ENCODE measurements at regions of chr3 and their contacts with region 1.

Region 1: GRCh38 chr3:31531992-31532586 is 636 bp upstream of the STT3B start:
- DNase-seq: peak; percentile 85 to 98
- H3K4me3 ChIP-seq: peak overlapping the region; percentile 92
- H3K27ac ChIP-seq: peak overlapping the region; percentile 94
- H3K4me1 ChIP-seq: peaks cover 17% of the 10 kb centered on the region
- H3K27me3 ChIP-seq: no peaks in the 10 kb centered on the region
- CTCF ChIP-seq: no peak

Region 2: GRCh38 chr3:30069056-30069455 is 1463.0 kb before region 1 on chr3:
- CTCF ChIA-PET with region 1: no interaction called
- POLR2A ChIA-PET with region 1: no interaction called
- intact Hi-C with region 1: no loop called
- DNase-seq: no peak
- H3K4me3 ChIP-seq: no peak overlapping the region
- H3K27ac ChIP-seq: no peak overlapping the region
- H3K4me1 ChIP-seq: 0 out of 2 replicates have a peak, but pooled peaks cover 5% of the 10 kb centered on the region
- H3K27me3 ChIP-seq: no peaks in the 10 kb centered on the region
- CTCF ChIP-seq: no peak

Region 3: GRCh38 chr3:30779686-30780287 is 752.3 kb before region 1 on chr3:
- CTCF ChIA-PET with region 1: no interaction called
- POLR2A ChIA-PET with region 1: no interaction called
- intact Hi-C with region 1: loop called (anchors 10 kb)
- DNase-seq: no peak
- H3K4me3 ChIP-seq: no peak overlapping the region
- H3K27ac ChIP-seq: no peak overlapping the region
- H3K4me1 ChIP-seq: 0 out of 2 replicates have a peak, but pooled peaks cover 6% of the 10 kb centered on the region
- H3K27me3 ChIP-seq: no peaks in the 10 kb centered on the region
- CTCF ChIP-seq: peak; percentile 40; the same call in 1 of the 2 replicates

Region 4: DNA sequence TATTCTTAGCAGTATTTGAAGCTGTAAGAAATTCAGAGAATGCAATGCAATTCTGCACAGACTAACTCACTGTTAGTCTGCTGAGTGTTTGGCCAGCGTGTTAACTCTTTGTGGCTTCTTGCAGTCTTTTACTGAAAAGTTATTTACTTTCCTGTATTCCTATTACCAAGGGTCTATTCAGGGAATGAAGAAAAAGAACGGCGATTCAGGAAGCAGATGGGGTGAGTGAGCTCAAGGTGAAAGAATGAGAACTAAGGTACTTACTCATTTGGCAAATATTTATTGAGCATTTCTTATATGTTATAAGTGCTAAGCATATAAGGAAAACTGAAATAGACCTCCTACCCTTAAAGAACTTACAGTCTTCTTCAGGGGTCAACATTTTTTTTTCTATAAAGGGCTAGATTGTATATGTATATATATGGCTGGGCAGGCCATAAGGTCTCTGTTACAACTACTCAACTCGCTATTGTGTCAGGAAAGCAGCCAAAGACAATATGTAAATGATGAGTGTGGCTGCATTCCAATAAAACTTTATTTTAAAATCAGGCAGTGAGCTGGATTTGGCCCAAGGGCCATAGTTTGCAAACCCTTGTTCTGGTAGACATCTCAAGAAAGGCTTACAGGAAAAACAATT is 365.7 kb before region 1 on chr3:
- CTCF ChIA-PET with region 1: no interaction called
- POLR2A ChIA-PET with region 1: no interaction called
- intact Hi-C with region 1: loop called (anchors 5 kb)
- DNase-seq: peak; percentile 35 to 83
- H3K4me3 ChIP-seq: no peak overlapping the region
- H3K27ac ChIP-seq: peak overlapping the region; percentile 57
- H3K4me1 ChIP-seq: peaks cover 20% of the 10 kb centered on the region
- H3K27me3 ChIP-seq: no peaks in the 10 kb centered on the region
- CTCF ChIP-seq: no peak

Region 5: DNA sequence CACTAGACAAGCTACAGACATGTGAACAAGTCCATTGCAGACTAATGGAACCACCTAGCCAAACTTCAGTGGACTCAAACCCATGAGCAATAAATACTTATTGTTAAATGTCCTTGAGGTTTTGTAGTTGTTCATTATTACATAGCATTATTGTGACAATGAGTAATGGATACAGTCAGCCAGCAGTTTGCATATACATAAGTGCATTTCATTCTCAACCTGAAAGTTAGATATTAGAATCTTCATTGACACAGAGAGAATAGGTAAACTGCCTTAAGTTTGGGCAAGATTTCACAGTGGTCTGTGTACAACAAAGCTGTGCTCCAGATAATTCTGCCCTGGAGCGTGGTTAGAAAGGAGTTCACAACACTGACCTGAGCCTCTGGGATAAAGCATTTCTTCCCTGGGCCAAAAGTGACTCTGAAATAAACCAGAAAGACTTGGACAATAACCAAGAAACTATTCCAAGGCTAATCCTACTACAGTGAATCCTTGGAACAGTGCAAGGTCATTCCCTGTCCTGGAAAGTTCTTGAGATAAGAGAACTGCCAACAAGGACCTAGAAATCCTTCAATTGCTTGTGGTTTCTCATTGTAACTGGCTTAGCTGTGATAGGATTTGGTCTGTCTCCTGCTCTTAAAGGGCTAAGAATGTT is 224.8 kb before region 1 on chr3:
- CTCF ChIA-PET with region 1: no interaction called
- POLR2A ChIA-PET with region 1: interaction called, 3 read pairs
- intact Hi-C with region 1: loop called (anchors 2 kb)
- DNase-seq: no peak
- H3K4me3 ChIP-seq: no peak overlapping the region
- H3K27ac ChIP-seq: no peak overlapping the region
- H3K4me1 ChIP-seq: peaks cover 9% of the 10 kb centered on the region
- H3K27me3 ChIP-seq: no peaks in the 10 kb centered on the region
- CTCF ChIP-seq: no peak

Region 6: GRCh38 chr3:31450345-31450744 is 81.7 kb before region 1 on chr3:
- CTCF ChIA-PET with region 1: no interaction called
- POLR2A ChIA-PET with region 1: no interaction called
- intact Hi-C with region 1: no loop called
- DNase-seq: no peak
- H3K4me3 ChIP-seq: no peak overlapping the region
- H3K27ac ChIP-seq: no peak overlapping the region
- H3K4me1 ChIP-seq: peaks cover 6% of the 10 kb centered on the region; the same call in 1 of the 2 replicates
- H3K27me3 ChIP-seq: no peaks in the 10 kb centered on the region
- CTCF ChIP-seq: no peak

Region 7: DNA sequence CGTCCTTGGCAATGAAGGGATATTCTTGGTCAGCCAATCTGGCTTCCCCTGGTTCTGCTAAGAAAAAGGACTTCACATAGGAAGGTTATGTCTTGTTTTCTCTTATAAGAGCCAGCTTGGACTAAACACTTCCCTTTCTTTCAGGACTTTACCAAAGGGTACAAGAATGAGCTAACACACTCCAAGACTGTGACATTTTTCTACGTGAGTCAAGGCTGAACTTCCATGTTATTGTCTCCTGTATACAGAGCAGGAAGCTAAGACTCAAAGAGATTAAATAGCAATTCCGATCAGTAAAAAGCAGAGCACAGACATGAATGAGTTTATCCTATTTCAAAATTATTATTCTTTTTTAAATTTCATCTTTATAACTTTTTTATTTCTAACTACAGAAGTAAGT is 62.7 kb before region 1 on chr3:
- CTCF ChIA-PET with region 1: no interaction called
- POLR2A ChIA-PET with region 1: interaction called, 12 read pairs
- intact Hi-C with region 1: no loop called
- DNase-seq: no peak
- H3K4me3 ChIP-seq: no peak overlapping the region
- H3K27ac ChIP-seq: no peak overlapping the region
- H3K4me1 ChIP-seq: no peaks in the 10 kb centered on the region
- H3K27me3 ChIP-seq: no peaks in the 10 kb centered on the region
- CTCF ChIP-seq: no peak

Region 8: DNA sequence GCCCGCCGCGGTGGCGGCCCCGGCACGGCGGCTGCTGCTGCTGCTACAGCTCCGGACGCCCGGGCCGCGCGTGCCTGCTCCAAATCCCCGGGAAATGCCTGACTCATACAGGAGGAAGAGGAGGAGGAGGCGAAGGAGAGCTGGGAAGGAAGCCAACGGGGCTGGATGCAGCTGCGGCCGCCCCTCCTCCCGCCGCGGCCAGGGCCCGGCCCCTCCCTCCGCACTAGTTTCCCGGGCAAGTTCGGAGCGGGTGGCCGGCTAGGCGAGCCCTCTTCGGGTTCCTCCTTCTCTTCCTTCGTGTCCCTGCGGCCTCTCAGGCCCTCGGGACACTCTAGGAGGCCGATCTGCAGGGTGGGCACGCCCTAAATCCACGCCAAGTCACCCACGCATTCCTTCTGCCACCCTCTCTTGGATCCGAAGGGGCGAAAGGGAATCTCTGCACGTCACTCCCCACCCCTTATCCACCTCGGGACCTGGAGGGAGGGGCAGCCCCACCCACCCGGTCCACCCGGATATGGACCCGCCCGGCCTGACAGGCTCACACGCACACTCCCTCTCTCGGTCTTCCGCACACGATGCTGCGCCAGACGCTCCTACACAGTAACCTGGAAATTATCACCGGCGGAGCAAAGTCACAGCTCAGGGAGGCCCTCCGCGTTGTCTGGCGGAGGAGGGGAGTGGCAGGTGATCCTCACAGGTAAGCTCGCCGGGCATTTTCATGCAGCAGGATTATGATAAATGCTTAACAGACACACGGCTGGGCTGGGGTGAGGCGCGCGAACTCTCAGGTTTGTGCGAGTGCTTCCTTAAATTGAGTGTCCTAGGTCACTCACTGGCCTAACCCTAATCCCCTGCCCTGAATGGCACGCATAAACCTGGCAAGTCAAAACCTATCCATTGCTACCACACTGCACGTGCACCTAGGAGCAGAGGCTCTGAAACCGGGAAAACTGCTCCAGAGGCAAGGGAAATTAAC is 449.4 kb after region 1 on chr3 and contains the starts of genes OSBPL10 and ZNF860:
- CTCF ChIA-PET with region 1: no interaction called
- POLR2A ChIA-PET with region 1: interaction called, 8 read pairs
- intact Hi-C with region 1: loop called (anchors 5 kb)
- DNase-seq: peak; percentile 67 to 93
- H3K4me3 ChIP-seq: peak within 1 kb of the TSS; percentile 64
- H3K27ac ChIP-seq: peak within 1 kb of the TSS; percentile 34; the same call in 1 of the 2 replicates
- H3K4me1 ChIP-seq: peaks cover 18% of the 10 kb centered on the region
- H3K27me3 ChIP-seq: no peaks in the 10 kb centered on the region
- CTCF ChIP-seq: no peak
- total RNA-seq, gene OSBPL10: 42.0 and 56.9 TPM in 2 replicates
- total RNA-seq, gene ZNF860: 2.6 and 5.3 TPM in 2 replicates